HCT116 (cell line): ENCODE measurements at regions of chr15 and their contacts with region 1.

Region 1: DNA sequence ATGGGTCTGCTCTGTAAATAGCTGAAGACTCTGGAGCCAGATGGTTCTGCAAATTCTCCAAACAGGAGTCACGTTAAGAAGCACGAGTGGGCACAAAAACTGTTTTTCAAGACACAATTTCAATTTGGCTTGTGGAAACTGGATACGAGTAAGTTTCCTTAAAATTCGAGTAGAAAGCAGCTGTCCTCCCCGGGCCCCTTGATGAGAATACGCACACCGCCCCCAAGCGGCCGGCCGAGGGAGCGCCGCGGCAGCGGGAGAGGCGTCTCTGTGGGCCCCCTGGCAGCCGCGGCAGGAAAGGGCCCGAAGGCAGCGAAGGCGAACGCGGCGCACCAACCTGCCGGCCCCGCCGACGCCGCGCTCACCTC is 778 bp upstream of the THBS1 start:
- DNase-seq: peak; percentile 63
- ATAC-seq: peak; percentile 75
- H3K4me3 ChIP-seq: peak overlapping the region; percentile 64 to 68
- H3K27ac ChIP-seq: no peak overlapping the region; the same call in 1 of the 2 replicates
- H3K4me1 ChIP-seq: peaks cover 11 to 29% of the 10 kb centered on the region in 2 experiments
- H3K27me3 ChIP-seq: no peaks in the 10 kb centered on the region
- CTCF ChIP-seq: peak; percentile 90 to 97 (median 94)
- POLR2A ChIP-seq: no peak
- RAD21 ChIP-seq: peak; percentile 77

Region 2: DNA sequence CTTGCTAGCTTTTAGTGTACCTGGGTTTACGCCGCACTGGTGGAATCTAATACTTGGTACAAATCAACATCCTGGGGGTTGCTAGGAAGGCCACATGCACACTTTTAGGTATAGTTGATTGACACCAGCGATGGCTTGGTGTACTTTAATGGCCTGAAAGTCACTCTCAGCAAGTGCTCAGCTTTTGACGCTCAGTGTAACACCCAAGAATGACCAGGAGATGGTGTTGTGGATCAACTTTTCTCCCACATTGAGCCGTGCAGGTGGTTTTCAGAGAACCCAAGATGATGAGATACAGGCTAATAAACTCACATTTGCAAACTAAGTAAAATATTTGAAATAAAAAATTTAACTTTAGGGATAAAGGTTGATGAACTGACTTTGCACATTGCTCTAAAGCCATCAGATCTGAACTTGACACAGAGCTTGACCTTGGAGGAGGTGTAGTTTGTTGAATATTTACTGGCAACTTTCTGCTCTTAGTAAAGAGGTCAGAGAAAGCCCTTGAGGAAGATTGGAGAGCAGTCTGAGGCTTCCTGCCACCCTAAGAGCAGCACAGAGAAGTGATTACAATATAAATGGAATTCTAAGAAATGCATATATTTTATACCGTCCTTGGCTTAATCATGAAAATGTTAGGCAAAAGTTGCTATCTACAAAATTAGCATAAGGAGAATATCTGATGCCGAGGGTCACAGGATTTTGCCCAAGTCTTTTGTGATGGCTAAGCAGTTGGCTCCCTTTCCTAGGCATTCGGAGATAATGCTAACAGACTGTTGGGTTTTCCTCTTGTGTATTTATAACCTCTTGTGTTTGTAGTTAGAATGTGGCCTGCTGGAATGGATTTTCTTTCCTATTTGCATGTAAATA is 872.1 kb before region 1 on chr15:
- CTCF ChIA-PET with region 1: interaction called, 6 read pairs
- POLR2A ChIA-PET with region 1: no interaction called
- RAD21 ChIA-PET with region 1: no interaction called
- intact Hi-C with region 1: loop called (anchors 2 kb)
- DNase-seq: peak; percentile 53
- ATAC-seq: peak; percentile 95
- H3K4me3 ChIP-seq: no peak overlapping the region
- H3K27ac ChIP-seq: no peak overlapping the region
- H3K4me1 ChIP-seq: no peaks in the 10 kb centered on the region
- H3K27me3 ChIP-seq: peaks cover 20% of the 10 kb centered on the region
- CTCF ChIP-seq: peak; percentile 40 to 70 (median 67); a peak in 5 of 6 replicates
- POLR2A ChIP-seq: no peak
- RAD21 ChIP-seq: peak; percentile 69

Region 3: GRCh38 chr15:38817427-38818156 is 762.5 kb before region 1 on chr15:
- CTCF ChIA-PET with region 1: interaction called, 4 read pairs
- POLR2A ChIA-PET with region 1: interaction called, 3 read pairs
- RAD21 ChIA-PET with region 1: no interaction called
- intact Hi-C with region 1: loop called (anchors 1 kb)
- DNase-seq: peak; percentile 65
- ATAC-seq: peak; percentile 100
- H3K4me3 ChIP-seq: no peak overlapping the region
- H3K27ac ChIP-seq: no peak overlapping the region
- H3K4me1 ChIP-seq: no peaks in the 10 kb centered on the region; a peak in 1 of 4 replicates
- H3K27me3 ChIP-seq: no peaks in the 10 kb centered on the region; the same call in 1 of the 2 replicates
- CTCF ChIP-seq: peak; percentile 98 to 100 (median 100)
- POLR2A ChIP-seq: no peak
- RAD21 ChIP-seq: peak; percentile 83

Region 4: GRCh38 chr15:39125904-39126303 is 454.2 kb before region 1 on chr15:
- CTCF ChIA-PET with region 1: interaction called, 9 read pairs
- POLR2A ChIA-PET with region 1: no interaction called
- RAD21 ChIA-PET with region 1: interaction called in 1 of 2 experiments, 3 read pairs
- intact Hi-C with region 1: loop called (anchors 2 kb)
- DNase-seq: peak; percentile 51
- ATAC-seq: 0 out of 2 replicates have a peak, but pooled peaks have one; percentile 30
- H3K4me3 ChIP-seq: no peak overlapping the region
- H3K27ac ChIP-seq: no peak overlapping the region
- H3K4me1 ChIP-seq: peaks cover 26 to 52% of the 10 kb centered on the region in 2 experiments
- H3K27me3 ChIP-seq: no peaks in the 10 kb centered on the region
- CTCF ChIP-seq: peak; percentile 29 to 76 (median 74); a peak in 5 of 6 replicates
- POLR2A ChIP-seq: no peak
- RAD21 ChIP-seq: peak; percentile 47

Region 5: DNA sequence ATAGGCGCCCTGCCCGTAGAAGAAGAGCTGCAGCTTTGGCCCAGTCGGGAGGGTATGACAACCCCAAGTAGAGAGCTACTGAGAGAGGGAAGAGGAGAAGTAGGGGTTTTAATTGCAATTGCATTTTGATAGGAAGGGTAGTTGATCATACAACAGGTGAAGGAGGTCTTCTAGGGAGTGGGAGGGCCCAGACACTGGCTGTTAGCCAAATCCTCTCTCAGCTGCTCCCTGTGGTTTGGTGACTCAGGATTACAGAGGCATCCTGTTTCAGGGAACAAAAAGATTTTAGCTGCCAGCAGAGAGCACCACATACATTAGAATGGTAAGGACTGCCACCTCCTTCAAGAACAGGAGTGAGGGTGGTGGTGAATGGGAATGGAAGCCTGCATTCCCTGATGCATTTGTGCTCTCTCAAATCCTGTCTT is 408.1 kb before region 1 on chr15:
- CTCF ChIA-PET with region 1: interaction called, 50 read pairs
- POLR2A ChIA-PET with region 1: interaction called, 11 read pairs
- RAD21 ChIA-PET with region 1: interaction called, 7 to 13 read pairs
- intact Hi-C with region 1: loop called (anchors 1 kb)
- DNase-seq: peak; percentile 82
- ATAC-seq: peak; percentile 99
- H3K4me3 ChIP-seq: no peak overlapping the region
- H3K27ac ChIP-seq: no peak overlapping the region
- H3K4me1 ChIP-seq: peaks cover 7 to 16% of the 10 kb centered on the region in 2 experiments; a peak in 3 of 4 replicates
- H3K27me3 ChIP-seq: no peaks in the 10 kb centered on the region
- CTCF ChIP-seq: peak; percentile 41 to 64 (median 62); a peak in 4 of 6 replicates
- POLR2A ChIP-seq: no peak
- RAD21 ChIP-seq: peak; percentile 86

Region 6: GRCh38 chr15:39444735-39445470 is 135.2 kb before region 1 on chr15:
- CTCF ChIA-PET with region 1: no interaction called
- POLR2A ChIA-PET with region 1: no interaction called
- RAD21 ChIA-PET with region 1: no interaction called
- intact Hi-C with region 1: loop called (anchors 5 kb)
- DNase-seq: no peak
- ATAC-seq: no peak
- H3K4me3 ChIP-seq: no peak overlapping the region
- H3K27ac ChIP-seq: no peak overlapping the region
- H3K4me1 ChIP-seq: no peaks in the 10 kb centered on the region
- H3K27me3 ChIP-seq: no peaks in the 10 kb centered on the region
- CTCF ChIP-seq: no peak
- POLR2A ChIP-seq: no peak
- RAD21 ChIP-seq: no peak